HepG2 (cell line): ENCODE measurements at regions of chr15 and their contacts with region 1.

Region 1: DNA sequence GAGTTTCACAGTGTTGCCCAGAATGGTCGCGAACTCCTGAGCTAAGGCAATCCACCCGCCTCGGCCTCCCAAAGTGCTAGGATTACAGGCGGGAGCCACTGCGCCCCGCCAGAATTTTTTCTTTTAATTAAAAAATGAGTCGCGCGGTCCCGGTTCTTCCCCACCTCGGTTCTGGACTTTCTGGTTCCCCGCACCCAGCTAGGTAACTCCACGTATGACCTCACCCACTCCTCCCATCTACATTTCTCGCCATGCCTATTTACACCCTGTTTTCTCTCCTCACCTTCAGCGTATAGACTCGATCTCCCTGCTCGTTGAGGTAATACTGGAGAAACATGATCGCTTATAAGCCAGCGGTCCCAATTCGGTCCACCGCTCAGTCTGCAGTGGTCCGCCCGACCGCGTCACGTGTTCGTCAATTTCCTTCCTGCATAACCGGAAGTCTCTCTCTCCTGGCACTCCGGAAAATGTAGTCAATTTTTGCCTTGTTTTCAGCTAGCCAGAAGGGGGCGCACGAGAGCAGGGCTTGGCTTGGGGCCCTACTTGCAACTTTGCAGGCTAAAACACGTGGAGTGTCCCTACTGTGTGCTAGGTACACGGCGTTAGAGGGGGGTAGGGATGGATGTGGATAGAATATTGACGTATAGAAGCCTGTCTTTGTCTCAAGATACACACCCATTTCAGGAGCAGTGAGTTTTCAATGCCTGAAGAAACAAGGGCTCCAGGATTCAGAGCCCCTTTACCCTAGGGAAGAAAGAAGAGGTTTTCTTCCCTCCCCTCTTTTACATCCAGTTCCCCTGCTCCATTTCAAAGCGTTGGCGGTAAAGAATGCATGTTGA is at the starts of genes NOP10 and NUTM1:
- DNase-seq: peak; percentile 90
- ATAC-seq: peak; percentile 94
- H3K4me3 ChIP-seq: peak within 1 kb of the TSS; percentile 89 to 95 (median 93)
- H3K27ac ChIP-seq: peak within 1 kb of the TSS; percentile 84
- H3K4me1 ChIP-seq: peaks cover 17% of the 10 kb centered on the region
- H3K27me3 ChIP-seq: peaks cover 0 to 1% of the 10 kb centered on the region in 2 experiments; a peak in 2 of 5 replicates
- CTCF ChIP-seq: peak; percentile 98
- EP300 ChIP-seq: peak; percentile 22 to 29; a peak in 1 of 4 replicates
- POLR2A ChIP-seq: peak; percentile 94 to 95
- RAD21 ChIP-seq: peak; percentile 67
- total RNA-seq, gene NOP10: 239 and 316 TPM in 2 replicates
- total RNA-seq, gene NUTM1: not detected in 2 replicates

Region 2: DNA sequence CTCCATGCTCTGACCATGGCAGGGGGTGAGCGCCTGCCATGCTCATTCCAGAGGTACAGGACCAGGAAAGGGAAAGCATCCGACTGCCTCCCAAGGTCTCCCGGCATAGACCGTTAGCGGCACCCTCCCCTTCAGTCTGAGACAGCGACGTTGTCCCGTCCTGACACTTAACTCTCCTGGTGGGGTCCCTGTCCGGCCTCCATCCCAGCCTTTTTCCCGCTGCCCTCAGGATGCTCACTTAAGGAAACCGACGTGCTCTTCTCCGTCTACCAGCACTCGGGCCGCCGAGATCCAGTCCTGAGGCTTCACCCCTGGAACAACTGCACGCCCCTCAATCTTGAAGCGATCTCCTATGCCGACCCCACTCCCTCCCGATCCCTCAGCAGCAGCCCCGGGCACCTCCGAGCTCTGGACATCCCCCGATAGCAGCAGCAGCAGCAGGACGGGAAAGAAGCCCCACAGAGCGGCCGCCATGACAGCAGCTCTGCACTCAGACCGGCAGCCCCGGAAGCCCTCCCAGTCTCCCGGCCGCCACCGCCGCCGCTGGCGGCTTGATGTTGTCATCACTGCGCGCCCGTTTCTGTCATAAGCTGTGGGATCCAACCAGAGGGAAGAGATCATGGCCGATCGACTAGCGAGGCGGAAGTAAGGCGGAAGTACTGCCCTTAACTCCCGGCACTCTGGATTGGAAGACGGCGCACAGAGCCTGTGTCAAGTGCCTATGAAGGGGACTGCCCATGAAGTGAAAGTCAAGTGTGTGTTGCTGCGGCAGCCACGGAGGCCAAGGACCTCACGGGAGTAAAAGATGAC is 241.4 kb before region 1 on chr15 and contains the starts of genes EMC7 and PGBD4:
- CTCF ChIA-PET with region 1: no interaction called
- POLR2A ChIA-PET with region 1: interaction called, 7 read pairs
- in situ Hi-C with region 1: no loop called
- intact Hi-C with region 1: loop called (anchors 10 kb)
- DNase-seq: peak; percentile 98
- ATAC-seq: peak; percentile 99
- H3K4me3 ChIP-seq: peak within 1 kb of the TSS; percentile 84 to 95 (median 92)
- H3K27ac ChIP-seq: peak within 1 kb of the TSS; percentile 83
- H3K4me1 ChIP-seq: peaks cover 27% of the 10 kb centered on the region
- H3K27me3 ChIP-seq: peaks cover 0 to 3% of the 10 kb centered on the region in 2 experiments; a peak in 1 of 5 replicates
- CTCF ChIP-seq: peak; percentile 6; the same call in 1 of the 2 replicates
- EP300 ChIP-seq: peak in 1 of 2 experiments; percentile 5; a peak in 1 of 4 replicates
- POLR2A ChIP-seq: peak; percentile 86 to 93
- RAD21 ChIP-seq: no peak
- total RNA-seq, gene EMC7: 29.3 and 46.8 TPM in 2 replicates
- total RNA-seq, gene PGBD4: 1.3 and 1.4 TPM in 2 replicates

Region 3: DNA sequence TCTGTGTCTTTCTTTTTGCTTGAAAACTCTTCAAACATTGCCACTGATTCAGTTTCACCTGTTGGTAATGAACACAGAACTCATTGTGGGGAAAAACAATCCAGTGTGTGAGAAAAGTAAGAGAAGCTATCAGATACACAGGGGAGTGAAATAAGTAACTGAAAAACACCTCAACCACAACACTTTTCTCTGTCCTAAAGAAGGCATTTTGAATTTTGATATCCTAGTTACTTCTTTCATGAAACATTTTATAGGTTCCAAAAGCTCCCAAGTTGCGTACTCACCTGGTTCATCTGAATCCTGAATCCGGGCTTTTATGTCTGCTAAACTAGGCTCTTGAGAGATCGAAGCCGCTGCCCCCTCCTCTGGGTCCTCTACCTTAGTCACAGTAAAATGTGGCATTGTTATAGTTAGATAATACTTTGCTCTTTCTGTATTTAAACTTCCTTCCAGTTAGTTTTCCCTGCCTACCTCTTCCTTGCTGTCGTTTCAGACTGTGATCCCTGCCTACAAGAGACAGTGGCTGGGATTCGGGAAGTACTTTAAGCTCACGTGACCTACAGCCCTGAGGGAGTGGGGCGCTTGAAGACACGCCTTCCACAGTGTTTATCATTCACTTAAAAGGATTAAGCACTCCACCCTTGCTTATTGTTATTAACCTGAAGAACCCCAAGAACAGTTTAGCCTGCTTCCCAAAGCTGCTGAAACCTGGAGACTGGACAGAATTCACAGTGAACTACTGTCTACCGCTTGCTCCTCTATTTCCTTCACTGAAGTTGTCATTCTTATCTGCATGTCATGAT is 24.5 kb before region 1 on chr15:
- CTCF ChIA-PET with region 1: no interaction called
- POLR2A ChIA-PET with region 1: interaction called, 16 read pairs
- in situ Hi-C with region 1: no loop called
- intact Hi-C with region 1: loop called (anchors 2 kb)
- DNase-seq: peak; percentile 78
- ATAC-seq: peak; percentile 96
- H3K4me3 ChIP-seq: peak overlapping the region; percentile 68 to 76 (median 71)
- H3K27ac ChIP-seq: peak overlapping the region; percentile 79
- H3K4me1 ChIP-seq: peaks cover 14% of the 10 kb centered on the region
- H3K27me3 ChIP-seq: no peaks in the 10 kb centered on the region
- CTCF ChIP-seq: no peak
- EP300 ChIP-seq: no peak
- POLR2A ChIP-seq: peak; percentile 62 to 72; a peak in 3 of 4 replicates
- RAD21 ChIP-seq: no peak

Region 4: DNA sequence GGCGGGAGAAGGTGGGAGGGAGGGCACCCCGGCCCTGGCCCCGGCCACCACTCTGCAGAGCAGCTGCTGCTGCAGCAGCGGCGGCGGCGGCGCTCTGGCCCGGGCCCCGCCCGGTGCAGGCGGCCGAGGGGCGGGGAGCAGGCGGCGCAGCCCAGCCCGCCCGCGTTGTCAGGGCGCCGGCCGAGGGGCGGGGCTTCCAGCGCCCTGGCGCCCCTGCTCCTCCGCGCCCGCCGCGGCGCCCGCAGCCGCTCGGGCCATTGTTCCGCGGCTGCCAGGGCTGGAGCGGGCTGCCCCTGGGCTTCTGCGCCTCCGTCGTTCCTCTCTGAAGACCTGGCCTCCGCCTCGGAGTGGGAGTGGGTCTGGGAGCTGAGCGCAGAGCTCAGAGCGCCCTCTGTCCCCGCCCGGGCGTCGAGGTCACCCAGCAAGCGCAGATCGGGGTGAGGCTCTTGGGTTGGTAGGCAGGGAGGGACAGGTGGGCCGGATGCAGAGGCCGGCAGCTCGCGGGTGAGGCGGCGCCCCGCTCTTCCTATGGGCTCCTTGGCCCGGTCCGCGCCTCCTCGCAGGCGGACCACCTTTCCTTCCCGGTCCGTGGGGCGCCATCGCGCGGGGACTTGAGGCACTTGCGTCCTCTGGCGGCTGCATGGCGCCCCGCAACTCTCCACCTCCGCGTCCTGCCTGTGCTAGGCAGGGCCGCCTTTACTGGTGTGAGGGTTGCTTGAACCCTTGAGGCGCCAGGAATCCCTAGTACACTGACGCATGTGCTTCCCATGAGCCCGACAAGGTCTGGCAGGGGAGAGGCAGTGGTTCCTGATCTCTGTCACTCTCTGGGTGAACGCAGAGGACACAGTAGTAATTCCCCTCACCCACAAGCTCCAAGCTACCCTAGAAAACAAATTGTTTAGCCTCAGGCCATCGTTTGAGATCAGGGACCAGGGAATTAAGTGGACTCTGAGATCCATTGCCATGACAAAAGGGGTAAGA is 24.4 kb after region 1 on chr15 and contains the start of gene LPCAT4:
- CTCF ChIA-PET with region 1: interaction called, 14 read pairs
- POLR2A ChIA-PET with region 1: interaction called, 28 read pairs
- in situ Hi-C with region 1: no loop called
- intact Hi-C with region 1: loop called (anchors 1 kb)
- DNase-seq: peak; percentile 66
- ATAC-seq: peak; percentile 90
- H3K4me3 ChIP-seq: peak within 1 kb of the TSS; percentile 59 to 94 (median 87)
- H3K27ac ChIP-seq: peak within 1 kb of the TSS; percentile 94
- H3K4me1 ChIP-seq: peaks cover 21% of the 10 kb centered on the region
- H3K27me3 ChIP-seq: no peaks in the 10 kb centered on the region
- CTCF ChIP-seq: peak; percentile 98
- EP300 ChIP-seq: 0 out of 4 replicates have a peak, but pooled peaks of 1 of the 2 experiments have one; percentile 18
- POLR2A ChIP-seq: peak; percentile 74 to 87
- RAD21 ChIP-seq: peak; percentile 84
- total RNA-seq, gene LPCAT4: 2.2 and 8.1 TPM in 2 replicates